ENCODE measurements at regions of chr2 and their contacts with region 1.

Region 1: GRCh38 chr2:231503766-231504165 is 26.5 kb downstream of the NMUR1 start:
- DNase-seq: no peak

Region 2: DNA sequence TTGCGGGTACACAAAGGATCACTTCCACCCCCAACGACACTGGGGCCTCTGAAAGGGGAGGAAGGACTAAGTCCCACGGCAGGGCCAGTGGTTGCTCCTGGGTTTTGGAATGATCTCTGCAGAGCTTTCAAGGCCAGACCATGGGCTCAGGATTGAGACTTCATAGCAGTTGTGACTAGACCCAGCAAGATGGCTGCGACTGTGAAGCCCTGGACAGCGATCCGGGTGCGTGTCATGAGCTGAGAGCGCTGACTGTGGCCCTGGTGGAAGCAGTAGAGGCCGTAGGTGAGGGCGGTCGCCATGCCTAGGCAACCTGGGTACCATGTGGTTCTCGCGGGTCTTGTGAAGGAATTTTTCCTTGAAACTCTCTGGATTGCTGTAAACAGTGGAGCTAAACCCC is 66.8 kb before region 1 on chr2:
- intact Hi-C with region 1: no loop called
- DNase-seq: no peak

Region 3: GRCh38 chr2:231463698-231464575 is 39.8 kb before region 1 on chr2 and contains the start of gene NCL:
- intact Hi-C with region 1: loop called in 1 of 2 experiments (anchors 2 kb)
- DNase-seq: peak; percentile 96
- total RNA-seq, gene NCL: 341 to 448 TPM

Measured in posterior vena cava (tissue), 2 donors.